ENCODE measurements at regions of chr4 and their contacts with region 1.

Region 1: GRCh38 chr4:41934815-41935651 is at the start of gene TMEM33:
- DNase-seq: peak; percentile 87
- H3K4me3 Mint-ChIP-seq: peak within 1 kb of the TSS; percentile 97
- H3K27ac Mint-ChIP-seq: peak within 1 kb of the TSS; percentile 88
- H3K4me1 Mint-ChIP-seq: peaks cover 38% of the 10 kb centered on the region
- H3K27me3 Mint-ChIP-seq: no peaks in the 10 kb centered on the region
- total RNA-seq, gene TMEM33: 33.9 to 34.6 TPM

Region 2: GRCh38 chr4:41853973-41854372 is 81.1 kb before region 1 on chr4:
- CTCF ChIA-PET with region 1: no interaction called
- intact Hi-C with region 1: no loop called
- DNase-seq: no peak
- H3K4me3 Mint-ChIP-seq: no peak overlapping the region
- H3K27ac Mint-ChIP-seq: no peak overlapping the region
- H3K4me1 Mint-ChIP-seq: no peaks in the 10 kb centered on the region
- H3K27me3 Mint-ChIP-seq: peaks cover 22% of the 10 kb centered on the region

Region 3: GRCh38 chr4:41990365-41991111 is 55.5 kb after region 1 on chr4 and contains the start of gene SLC30A9:
- CTCF ChIA-PET with region 1: interaction called, 5 read pairs
- intact Hi-C with region 1: loop called (anchors 1 kb)
- DNase-seq: peak; percentile 96
- H3K4me3 Mint-ChIP-seq: peak within 1 kb of the TSS; percentile 98
- H3K27ac Mint-ChIP-seq: peak within 1 kb of the TSS; percentile 94
- H3K4me1 Mint-ChIP-seq: peaks cover 24% of the 10 kb centered on the region
- H3K27me3 Mint-ChIP-seq: no peaks in the 10 kb centered on the region
- total RNA-seq, gene SLC30A9: 36.2 to 36.3 TPM

Measured in activated naive CD4-positive, alpha-beta T cell treated with anti-CD3 and anti-CD28 coated beads for 36 hours (primary cell).